ENCODE measurements at regions of chr11 and their contacts with region 1.

Region 1: DNA sequence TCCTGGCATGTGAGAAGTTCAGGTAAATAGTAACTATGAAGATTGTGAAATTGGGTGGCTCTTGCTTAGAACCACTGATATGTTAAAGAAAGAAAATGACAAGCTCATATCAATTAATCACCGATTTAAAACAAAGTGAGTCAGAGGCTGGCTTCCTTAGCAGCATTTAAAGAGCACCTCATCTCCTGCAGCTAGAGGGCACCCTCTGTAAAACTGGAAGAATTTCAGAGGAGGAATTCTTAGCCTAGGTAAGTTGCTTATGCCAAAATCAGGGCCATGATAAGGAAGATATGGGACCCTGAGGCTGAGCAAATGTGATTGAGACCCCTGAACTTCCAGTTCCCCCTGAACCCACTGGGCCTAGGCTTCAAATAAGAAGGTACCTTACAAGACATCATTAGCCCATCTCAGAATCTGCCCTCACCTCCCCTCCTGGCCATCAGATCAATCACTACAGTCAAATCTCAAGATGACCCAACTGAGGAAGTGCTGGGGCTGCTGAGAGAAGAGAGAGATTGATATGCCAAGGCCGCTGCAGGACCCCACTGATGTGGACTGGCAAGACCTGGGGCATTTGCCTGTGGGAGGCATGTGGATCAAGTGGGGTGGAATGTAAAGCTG is 8.6 kb upstream of the CD3E start:
- DNase-seq: peak; percentile 42
- H3K4me3 Mint-ChIP-seq: no peak overlapping the region
- H3K27ac Mint-ChIP-seq: no peak overlapping the region
- H3K4me1 Mint-ChIP-seq: peaks cover 19% of the 10 kb centered on the region
- H3K27me3 Mint-ChIP-seq: peaks cover 1% of the 10 kb centered on the region

Region 2: GRCh38 chr11:118051611-118052461 is 244.1 kb before region 1 on chr11:
- CTCF ChIA-PET with region 1: no interaction called
- POLR2A ChIA-PET with region 1: no interaction called
- DNase-seq: peak; percentile 81
- H3K4me3 Mint-ChIP-seq: peak overlapping the region; percentile 45
- H3K27ac Mint-ChIP-seq: peak overlapping the region; percentile 95
- H3K4me1 Mint-ChIP-seq: peaks cover 62% of the 10 kb centered on the region
- H3K27me3 Mint-ChIP-seq: peaks cover 4% of the 10 kb centered on the region

Region 3: GRCh38 chr11:118171269-118172062 is 124.5 kb before region 1 on chr11:
- CTCF ChIA-PET with region 1: interaction called, 11 read pairs
- POLR2A ChIA-PET with region 1: no interaction called
- DNase-seq: peak; percentile 73
- H3K4me3 Mint-ChIP-seq: no peak overlapping the region
- H3K27ac Mint-ChIP-seq: no peak overlapping the region
- H3K4me1 Mint-ChIP-seq: peaks cover 2% of the 10 kb centered on the region
- H3K27me3 Mint-ChIP-seq: peaks cover 28% of the 10 kb centered on the region

Region 4: GRCh38 chr11:118277306-118277705 is 18.6 kb before region 1 on chr11:
- CTCF ChIA-PET with region 1: interaction called, 49 read pairs
- POLR2A ChIA-PET with region 1: interaction called, 4 read pairs
- DNase-seq: no peak
- H3K4me3 Mint-ChIP-seq: no peak overlapping the region
- H3K27ac Mint-ChIP-seq: peak overlapping the region; percentile 34
- H3K4me1 Mint-ChIP-seq: peaks cover 44% of the 10 kb centered on the region
- H3K27me3 Mint-ChIP-seq: peaks cover 2% of the 10 kb centered on the region

Region 5: GRCh38 chr11:118314988-118315411 is 19.1 kb after region 1 on chr11:
- CTCF ChIA-PET with region 1: interaction called, 15 read pairs
- POLR2A ChIA-PET with region 1: interaction called, 3 read pairs
- DNase-seq: no peak
- H3K4me3 Mint-ChIP-seq: peak overlapping the region; percentile 54
- H3K27ac Mint-ChIP-seq: peak overlapping the region; percentile 97
- H3K4me1 Mint-ChIP-seq: peaks cover 85% of the 10 kb centered on the region
- H3K27me3 Mint-ChIP-seq: no peaks in the 10 kb centered on the region

Region 6: GRCh38 chr11:118353084-118353710 is 57.3 kb after region 1 on chr11:
- CTCF ChIA-PET with region 1: interaction called, 73 read pairs
- POLR2A ChIA-PET with region 1: no interaction called
- DNase-seq: no peak
- H3K4me3 Mint-ChIP-seq: no peak overlapping the region
- H3K27ac Mint-ChIP-seq: peak overlapping the region; percentile 51
- H3K4me1 Mint-ChIP-seq: peaks cover 20% of the 10 kb centered on the region
- H3K27me3 Mint-ChIP-seq: no peaks in the 10 kb centered on the region

Region 7: GRCh38 chr11:118359295-118359958 is 63.5 kb after region 1 on chr11 and contains the start of gene UBE4A:
- CTCF ChIA-PET with region 1: interaction called, 15 read pairs
- POLR2A ChIA-PET with region 1: interaction called, 5 read pairs
- DNase-seq: peak; percentile 98
- H3K4me3 Mint-ChIP-seq: peak within 1 kb of the TSS; percentile 92
- H3K27ac Mint-ChIP-seq: peak within 1 kb of the TSS; percentile 83
- H3K4me1 Mint-ChIP-seq: peaks cover 45% of the 10 kb centered on the region
- H3K27me3 Mint-ChIP-seq: no peaks in the 10 kb centered on the region
- total RNA-seq, gene UBE4A: 42.1 to 44.1 TPM

Region 8: GRCh38 chr11:118503216-118503615 is 207.3 kb after region 1 on chr11:
- CTCF ChIA-PET with region 1: no interaction called
- POLR2A ChIA-PET with region 1: no interaction called
- DNase-seq: no peak
- H3K4me3 Mint-ChIP-seq: no peak overlapping the region
- H3K27ac Mint-ChIP-seq: no peak overlapping the region
- H3K4me1 Mint-ChIP-seq: no peaks in the 10 kb centered on the region
- H3K27me3 Mint-ChIP-seq: no peaks in the 10 kb centered on the region

Region 9: DNA sequence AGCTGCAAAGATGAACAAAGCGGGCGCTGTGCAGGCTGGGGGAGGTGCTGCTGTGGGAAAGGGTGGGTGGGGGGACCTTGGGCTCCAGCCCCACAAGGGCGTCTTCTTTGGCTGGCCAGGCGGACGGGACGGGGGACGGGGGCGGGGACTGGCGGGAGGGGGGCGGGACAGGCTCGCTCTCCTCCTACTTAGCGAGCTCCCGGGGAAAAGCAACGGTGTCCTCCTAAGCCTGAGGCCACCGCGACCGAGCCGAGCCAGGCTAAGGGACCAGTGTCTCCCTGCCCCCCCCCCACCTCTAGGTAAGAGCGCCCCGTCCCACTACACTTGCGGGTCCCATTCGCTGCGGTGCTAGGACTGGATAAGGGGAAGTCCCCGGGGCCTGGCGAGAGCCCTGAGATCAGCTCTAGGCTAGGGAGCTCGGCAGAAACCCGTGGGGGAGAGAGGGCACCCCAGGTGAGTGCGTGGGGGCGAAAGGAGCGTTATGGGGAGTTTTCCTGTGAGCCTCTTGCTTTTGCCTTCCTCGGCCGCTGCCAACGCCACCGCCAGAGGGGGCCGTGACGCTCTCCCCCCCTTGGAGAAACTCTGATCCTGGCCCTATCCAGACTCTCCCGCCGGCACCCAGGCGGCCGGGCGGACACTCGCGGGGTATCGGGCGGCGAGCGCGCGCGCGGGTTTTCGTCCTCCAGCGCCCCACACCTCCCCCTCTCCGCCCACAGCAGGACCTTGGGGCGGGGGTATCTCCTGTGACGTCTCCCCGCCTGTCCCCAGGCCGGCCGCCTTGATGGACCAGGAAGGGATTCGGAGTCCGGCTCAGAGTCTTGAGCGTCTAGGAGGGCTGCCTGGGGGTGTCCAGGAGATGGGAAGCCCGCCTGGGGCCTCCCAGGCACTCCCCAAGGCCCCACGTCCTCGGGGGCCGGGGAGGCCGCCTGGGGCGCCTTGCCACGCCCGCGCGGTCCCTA is 311.7 kb after region 1 on chr11 and contains the start of gene PHLDB1:
- CTCF ChIA-PET with region 1: no interaction called
- POLR2A ChIA-PET with region 1: no interaction called
- DNase-seq: no peak
- H3K4me3 Mint-ChIP-seq: peak within 1 kb of the TSS; percentile 72
- H3K27ac Mint-ChIP-seq: no peak within 1 kb of the TSS
- H3K4me1 Mint-ChIP-seq: peaks cover 26% of the 10 kb centered on the region
- H3K27me3 Mint-ChIP-seq: peaks cover 43% of the 10 kb centered on the region
- total RNA-seq, gene PHLDB1: 0.53 to 0.63 TPM

Measured in activated CD4-positive, alpha-beta memory T cell treated with anti-CD3 and anti-CD28 coated beads, Interleukin-2, amount 10 ng/mL, durations not matched to agents 7 days and 5 days (primary cell).